Ascending aorta (tissue), 2 donors: ENCODE measurements at regions of chr17 and their contacts with region 1.

Region 1: GRCh38 chr17:50200457-50201275 is 765 bp downstream of the COL1A1 start:
- DNase-seq: peak; percentile 74 to 96
- H3K4me3 ChIP-seq: peak overlapping the region; percentile 49 to 80
- H3K27ac ChIP-seq: peak overlapping the region; percentile 97 to 99
- H3K4me1 ChIP-seq: peaks cover 13 to 49% of the 10 kb centered on the region in 2 donors
- H3K27me3 ChIP-seq: no peaks in the 10 kb centered on the region
- CTCF ChIP-seq: peak; percentile 99 to 100 (median 99)

Region 2: DNA sequence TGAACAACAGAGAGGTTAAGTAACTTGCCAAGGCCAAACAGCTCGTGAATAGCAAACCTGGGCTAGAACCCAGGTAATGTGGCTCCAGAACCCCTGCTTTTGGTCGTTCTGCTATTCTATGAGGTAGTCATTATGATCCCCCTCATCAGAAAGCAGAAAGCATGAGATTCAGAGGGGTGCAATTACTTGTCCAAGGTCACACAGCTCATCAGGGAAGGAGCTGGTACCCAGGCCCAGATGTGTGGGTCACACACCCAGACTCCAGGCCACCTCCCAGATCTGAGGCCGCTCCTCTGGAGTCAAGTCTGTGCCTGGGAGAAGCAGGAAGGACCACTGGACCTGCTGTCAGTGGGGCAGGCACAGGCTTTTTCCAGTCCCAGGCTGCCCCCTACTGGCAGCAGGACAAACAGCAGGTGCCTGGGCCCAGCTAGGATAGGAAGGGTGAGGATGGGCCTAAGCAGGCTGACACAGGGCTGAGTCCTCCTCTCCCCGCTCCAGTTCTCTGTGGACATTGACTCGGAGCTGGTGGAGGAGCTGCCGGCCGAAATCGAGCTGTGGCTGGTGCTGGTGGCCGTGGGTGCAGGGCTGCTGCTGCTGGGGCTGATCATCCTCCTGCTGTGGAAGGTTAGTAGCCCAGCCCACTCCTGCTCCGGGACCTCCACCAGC is 113.3 kb before region 1 on chr17:
- intact Hi-C with region 1: no loop called
- DNase-seq: peak in 1 of 2 donors; percentile 86
- H3K4me3 ChIP-seq: no peak overlapping the region
- H3K27ac ChIP-seq: peak overlapping the region; percentile 34 to 48
- H3K4me1 ChIP-seq: no peaks in the 10 kb centered on the region
- H3K27me3 ChIP-seq: no peaks in the 10 kb centered on the region
- CTCF ChIP-seq: peak; percentile 91 to 96 (median 93)

Region 3: DNA sequence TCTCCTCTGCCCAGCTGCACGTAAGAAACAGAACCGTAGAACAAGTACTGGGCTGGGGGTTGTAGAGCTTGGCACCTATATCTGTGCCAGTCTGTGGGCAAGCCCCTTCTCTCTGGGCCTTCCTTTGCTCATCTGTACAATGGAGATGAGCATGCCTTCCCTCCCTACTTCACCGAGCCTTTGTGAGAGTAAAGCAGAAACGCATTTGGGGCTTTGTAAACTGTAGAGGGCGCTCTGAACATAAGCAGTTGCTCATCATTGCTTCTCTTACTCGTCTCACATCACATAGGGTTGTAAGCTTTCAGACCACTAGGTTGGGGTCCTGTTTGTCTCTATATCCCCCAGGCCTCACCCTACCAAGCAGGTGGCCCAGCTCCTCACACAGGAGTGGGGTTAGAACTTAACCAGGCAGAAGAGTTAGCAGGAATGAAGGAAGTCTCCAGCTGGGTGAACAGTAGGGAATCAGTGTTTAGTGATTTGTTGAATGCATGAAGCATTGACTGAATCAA is 85.8 kb before region 1 on chr17:
- intact Hi-C with region 1: loop called (anchors 2 kb)
- DNase-seq: no peak
- H3K4me3 ChIP-seq: no peak overlapping the region
- H3K27ac ChIP-seq: no peak overlapping the region
- H3K4me1 ChIP-seq: peaks cover 21 to 28% of the 10 kb centered on the region in 2 donors
- H3K27me3 ChIP-seq: no peaks in the 10 kb centered on the region
- CTCF ChIP-seq: peak; percentile 50 to 71 (median 64)

Region 4: GRCh38 chr17:50169121-50169764 is 31.4 kb before region 1 on chr17:
- intact Hi-C with region 1: loop called (anchors 1 kb)
- DNase-seq: no peak
- H3K4me3 ChIP-seq: peak overlapping the region in 1 of 2 donors; percentile 31
- H3K27ac ChIP-seq: peak overlapping the region; percentile 97 to 99
- H3K4me1 ChIP-seq: peaks cover 21 to 43% of the 10 kb centered on the region in 2 donors
- H3K27me3 ChIP-seq: no peaks in the 10 kb centered on the region
- CTCF ChIP-seq: peak; percentile 72 to 94 (median 75)

Region 5: GRCh38 chr17:50218771-50219315 is 18.2 kb after region 1 on chr17:
- intact Hi-C with region 1: loop called (anchors 1 kb)
- DNase-seq: no peak
- H3K4me3 ChIP-seq: no peak overlapping the region
- H3K27ac ChIP-seq: peak overlapping the region; percentile 87 to 90
- H3K4me1 ChIP-seq: peaks cover 21 to 55% of the 10 kb centered on the region in 2 donors
- H3K27me3 ChIP-seq: no peaks in the 10 kb centered on the region
- CTCF ChIP-seq: no peak

Region 6: GRCh38 chr17:50272711-50273653 is 72.3 kb after region 1 on chr17:
- intact Hi-C with region 1: loop called (anchors 1 kb)
- DNase-seq: no peak
- H3K4me3 ChIP-seq: peak overlapping the region; percentile 63 to 68
- H3K27ac ChIP-seq: peak overlapping the region; percentile 82
- H3K4me1 ChIP-seq: peaks cover 0 to 16% of the 10 kb centered on the region in 2 donors
- H3K27me3 ChIP-seq: no peaks in the 10 kb centered on the region
- CTCF ChIP-seq: peak; percentile 64 to 98 (median 86)

Region 7: DNA sequence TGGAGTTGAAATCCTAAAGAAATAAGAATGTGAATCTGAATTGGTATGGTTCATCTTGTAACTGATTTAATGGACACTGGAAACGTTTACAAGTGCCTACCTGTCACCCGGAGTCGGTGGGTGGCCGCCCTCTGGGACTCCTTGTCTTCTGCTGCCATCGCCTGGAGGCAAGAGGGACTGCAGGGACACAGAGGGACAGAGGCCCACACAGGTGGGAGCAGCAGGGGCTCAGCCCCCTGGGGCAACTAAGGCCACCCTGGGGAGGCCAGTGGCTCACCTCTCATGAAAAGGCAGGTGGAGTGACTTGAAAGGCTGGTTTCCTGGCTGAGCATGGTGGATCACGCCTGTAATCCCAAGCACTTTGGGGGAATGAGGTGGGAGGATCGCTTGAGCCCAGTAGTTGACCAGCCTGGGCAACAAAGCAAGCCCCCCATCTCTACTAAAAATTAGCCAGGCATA is 96.8 kb after region 1 on chr17:
- intact Hi-C with region 1: loop called (anchors 1 kb)
- DNase-seq: peak; percentile 43 to 85
- H3K4me3 ChIP-seq: no peak overlapping the region
- H3K27ac ChIP-seq: no peak overlapping the region
- H3K4me1 ChIP-seq: no peaks in the 10 kb centered on the region
- H3K27me3 ChIP-seq: no peaks in the 10 kb centered on the region
- CTCF ChIP-seq: peak; percentile 98 to 99 (median 98)